ENCODE measurements at regions of chr3 and their contacts with region 1.

Region 1: DNA sequence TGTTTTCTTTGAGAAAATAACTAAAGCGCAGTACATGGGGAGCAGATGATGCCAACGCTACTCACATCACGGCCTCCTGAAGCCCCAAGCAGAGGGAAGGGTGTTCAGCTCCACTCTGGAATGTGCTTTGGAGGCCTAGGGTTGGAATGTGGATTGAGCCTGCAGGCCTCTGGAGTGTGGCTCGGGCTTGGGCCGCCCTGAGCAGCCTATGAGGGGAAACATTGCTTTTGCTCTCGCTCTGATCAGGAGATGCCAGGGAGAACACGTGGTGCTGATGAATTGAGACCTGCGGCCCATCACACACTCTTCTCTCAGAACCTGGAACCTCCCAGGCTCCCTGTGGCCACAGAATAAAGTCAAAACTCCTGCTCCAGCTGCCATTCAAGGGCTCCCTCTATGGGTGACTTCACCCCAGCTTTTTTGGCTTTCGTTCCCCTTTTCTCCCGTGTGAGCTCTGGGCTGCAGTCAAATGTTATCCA is 23.3 kb downstream of the CCDC13 start:
- DNase-seq: peak in 1 of 2 experiments; percentile 12
- H3K4me3 ChIP-seq: no peak overlapping the region
- H3K27ac ChIP-seq: no peak overlapping the region
- H3K4me1 ChIP-seq: 0 out of 2 replicates have a peak, but pooled peaks cover 12% of the 10 kb centered on the region
- H3K27me3 ChIP-seq: no peaks in the 10 kb centered on the region
- CTCF ChIP-seq: peak; percentile 48

Region 2: DNA sequence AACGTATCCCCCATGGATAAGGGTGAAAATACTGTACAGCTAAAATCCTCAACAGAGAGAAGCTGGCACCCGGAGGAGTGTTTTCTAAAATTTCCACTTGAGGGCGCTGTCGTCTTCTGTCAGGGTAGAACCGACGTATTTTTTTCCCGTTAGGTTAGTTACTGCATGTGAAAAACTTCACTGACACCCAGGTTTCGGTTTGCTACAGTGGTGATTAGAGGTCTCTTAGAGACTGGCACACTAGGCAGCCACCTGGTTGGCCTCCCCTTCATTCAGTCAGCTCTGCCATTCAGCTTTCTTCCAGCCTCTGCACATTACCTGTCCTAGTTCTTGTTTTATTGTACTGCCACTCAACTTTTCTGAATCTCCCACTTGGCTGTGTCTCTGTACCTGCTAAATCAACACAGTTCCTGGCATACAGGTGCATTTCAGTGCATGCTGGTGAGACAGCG is 502.2 kb before region 1 on chr3:
- CTCF ChIA-PET with region 1: no interaction called
- POLR2A ChIA-PET with region 1: no interaction called
- intact Hi-C with region 1: loop called (anchors 1 kb)
- DNase-seq: peak; percentile 53 to 64
- H3K4me3 ChIP-seq: no peak overlapping the region
- H3K27ac ChIP-seq: no peak overlapping the region
- H3K4me1 ChIP-seq: no peaks in the 10 kb centered on the region
- H3K27me3 ChIP-seq: 0 out of 2 replicates have a peak, but pooled peaks cover 7% of the 10 kb centered on the region
- CTCF ChIP-seq: peak; percentile 86

Region 3: DNA sequence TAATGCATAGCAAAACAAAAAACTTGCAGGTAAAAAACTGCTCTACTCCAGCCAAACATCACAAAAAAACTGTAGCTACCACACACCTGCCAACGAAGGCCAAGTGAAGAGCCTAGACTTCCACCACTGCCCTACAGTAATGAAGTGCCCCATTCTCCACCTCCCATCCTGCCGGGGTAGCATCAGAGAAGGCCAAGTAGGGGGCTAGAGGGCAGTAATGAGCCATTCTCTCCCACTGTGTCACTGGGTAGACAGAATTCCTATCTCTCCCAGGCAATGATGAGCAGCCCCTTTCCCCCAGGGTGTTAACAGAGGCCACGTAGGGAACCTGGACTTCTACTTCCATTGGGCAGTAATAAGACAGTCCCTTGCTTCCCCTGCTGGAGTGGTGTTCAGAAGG is 177.5 kb before region 1 on chr3:
- CTCF ChIA-PET with region 1: interaction called, 4 read pairs
- POLR2A ChIA-PET with region 1: no interaction called
- intact Hi-C with region 1: loop called (anchors 2 kb)
- DNase-seq: peak in 1 of 2 experiments; percentile 28
- H3K4me3 ChIP-seq: no peak overlapping the region
- H3K27ac ChIP-seq: no peak overlapping the region
- H3K4me1 ChIP-seq: no peaks in the 10 kb centered on the region
- H3K27me3 ChIP-seq: no peaks in the 10 kb centered on the region
- CTCF ChIP-seq: peak; percentile 50; the same call in 1 of the 2 replicates